Activated naive CD4-positive, alpha-beta T cell treated with anti-CD3 and anti-CD28 coated beads, Interleukin-2, amount 10 ng/mL, durations not matched to agents 7 days and 5 days (primary cell): ENCODE measurements at regions of chr1 and their contacts with region 1.

Region 1: DNA sequence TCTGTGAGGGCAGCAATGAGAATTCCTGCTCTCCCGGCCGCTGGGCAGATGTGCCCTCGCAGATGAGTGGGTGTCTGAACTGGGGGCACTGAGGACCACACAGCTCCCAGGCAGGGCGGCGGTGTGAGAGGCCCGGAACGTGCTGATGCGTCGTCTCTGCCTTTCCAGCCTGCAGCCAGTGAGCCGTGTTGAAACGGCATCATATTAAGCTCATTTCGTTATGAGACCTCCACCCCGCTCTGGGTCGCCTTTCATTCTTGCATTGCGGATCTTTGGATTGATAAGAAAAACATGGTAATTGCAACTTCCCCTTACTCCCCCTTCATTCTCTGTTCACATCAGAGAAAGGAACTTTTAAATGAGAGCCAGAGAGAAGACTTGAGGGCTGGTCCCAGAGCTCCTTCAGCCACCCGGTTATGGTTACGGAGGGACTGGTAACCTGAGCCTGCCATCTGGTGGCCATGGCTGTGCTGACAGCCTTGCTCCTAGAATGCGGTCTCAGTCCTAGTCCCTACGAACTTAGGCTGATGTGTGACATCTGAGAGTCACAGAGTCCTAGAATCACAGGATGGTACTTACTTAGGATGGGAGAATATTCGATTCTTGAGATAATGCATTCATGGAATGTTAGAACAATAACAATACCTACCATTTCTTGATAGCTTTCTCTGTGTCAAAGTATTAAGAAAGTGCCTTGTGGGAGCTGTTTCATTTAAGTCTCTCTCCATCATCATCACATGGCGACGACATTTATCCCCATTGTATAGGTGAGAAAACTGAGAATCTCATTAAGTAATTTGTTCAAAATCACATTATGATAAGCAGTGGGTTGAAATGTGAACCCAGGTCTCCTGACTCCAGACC is 271.0 kb downstream of the TRABD2B start:
- DNase-seq: peak; percentile 75
- H3K4me3 Mint-ChIP-seq: no peak overlapping the region
- H3K27ac Mint-ChIP-seq: no peak overlapping the region
- H3K4me1 Mint-ChIP-seq: peaks cover 5% of the 10 kb centered on the region
- H3K27me3 Mint-ChIP-seq: peaks cover 64% of the 10 kb centered on the region

Region 2: GRCh38 chr1:47388891-47389238 is 337.4 kb before region 1 on chr1:
- CTCF ChIA-PET with region 1: interaction called, 40 read pairs
- DNase-seq: peak; percentile 65
- H3K4me3 Mint-ChIP-seq: no peak overlapping the region
- H3K27ac Mint-ChIP-seq: no peak overlapping the region
- H3K4me1 Mint-ChIP-seq: no peaks in the 10 kb centered on the region
- H3K27me3 Mint-ChIP-seq: peaks cover 18% of the 10 kb centered on the region

Region 3: DNA sequence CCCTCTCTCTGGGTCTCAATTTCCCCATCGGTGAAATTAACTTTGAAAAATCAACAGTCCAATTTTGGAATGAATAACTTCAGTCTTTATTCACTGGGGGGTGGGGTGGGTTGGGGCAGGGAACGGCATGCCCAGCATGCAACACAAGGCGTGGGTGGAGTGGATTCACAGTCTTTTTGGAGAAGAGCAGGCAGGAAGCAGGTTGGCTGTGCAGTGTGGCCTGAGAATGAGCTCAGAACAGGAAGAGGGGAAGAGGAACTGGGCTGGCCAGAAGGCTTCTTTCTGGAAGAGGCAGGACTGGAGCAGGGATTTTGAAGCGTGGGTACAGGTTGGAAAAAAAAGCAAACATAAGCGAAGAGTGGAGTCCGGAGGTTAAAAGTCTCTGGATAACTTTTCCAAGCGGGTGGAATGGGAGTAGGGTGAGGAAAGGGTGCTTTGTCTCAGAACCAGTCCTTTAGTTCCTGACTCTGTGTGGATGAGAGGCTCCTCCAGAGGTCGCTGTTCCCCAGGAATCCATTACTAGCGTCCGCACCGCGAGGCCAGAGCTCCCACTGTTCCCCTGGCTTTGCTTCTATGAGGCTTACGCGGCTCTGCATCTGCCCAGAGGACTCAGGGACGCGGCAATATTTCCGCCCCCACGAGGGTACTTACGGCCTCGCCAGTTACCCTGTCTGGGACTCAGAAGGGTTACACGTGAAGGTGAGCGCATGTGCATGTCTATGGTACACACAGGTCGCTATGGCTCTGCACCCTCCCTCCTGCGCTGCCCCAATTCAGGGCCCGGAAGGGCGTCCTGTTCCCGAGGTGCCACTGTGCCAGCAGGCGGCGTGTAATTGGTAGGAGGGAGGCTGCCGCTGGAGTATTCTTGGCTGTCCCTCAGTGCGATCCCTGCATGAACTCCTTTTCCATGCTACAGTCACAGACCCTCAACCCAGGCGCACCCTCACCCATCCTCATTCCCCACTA is 293.9 kb before region 1 on chr1:
- CTCF ChIA-PET with region 1: interaction called, 36 read pairs
- DNase-seq: peak; percentile 77
- H3K4me3 Mint-ChIP-seq: peak overlapping the region; percentile 37
- H3K27ac Mint-ChIP-seq: peak overlapping the region; percentile 76
- H3K4me1 Mint-ChIP-seq: peaks cover 43% of the 10 kb centered on the region
- H3K27me3 Mint-ChIP-seq: peaks cover 68% of the 10 kb centered on the region

Region 4: GRCh38 chr1:47437447-47438164 is 288.6 kb before region 1 on chr1 and contains the start of gene FOXD2:
- CTCF ChIA-PET with region 1: interaction called, 36 read pairs
- DNase-seq: peak; percentile 91
- H3K4me3 Mint-ChIP-seq: peak within 1 kb of the TSS; percentile 93
- H3K27ac Mint-ChIP-seq: peak within 1 kb of the TSS; percentile 86
- H3K4me1 Mint-ChIP-seq: peaks cover 34% of the 10 kb centered on the region
- H3K27me3 Mint-ChIP-seq: peaks cover 49% of the 10 kb centered on the region

Region 5: GRCh38 chr1:47449822-47450552 is 276.2 kb before region 1 on chr1:
- CTCF ChIA-PET with region 1: interaction called, 16 read pairs
- DNase-seq: no peak
- H3K4me3 Mint-ChIP-seq: no peak overlapping the region
- H3K27ac Mint-ChIP-seq: no peak overlapping the region
- H3K4me1 Mint-ChIP-seq: peaks cover 4% of the 10 kb centered on the region
- H3K27me3 Mint-ChIP-seq: peaks cover 56% of the 10 kb centered on the region

Region 6: GRCh38 chr1:47738560-47739182 is 12.4 kb after region 1 on chr1:
- CTCF ChIA-PET with region 1: interaction called, 11 read pairs
- DNase-seq: no peak
- H3K4me3 Mint-ChIP-seq: no peak overlapping the region
- H3K27ac Mint-ChIP-seq: no peak overlapping the region
- H3K4me1 Mint-ChIP-seq: no peaks in the 10 kb centered on the region
- H3K27me3 Mint-ChIP-seq: peaks cover 19% of the 10 kb centered on the region

Region 7: DNA sequence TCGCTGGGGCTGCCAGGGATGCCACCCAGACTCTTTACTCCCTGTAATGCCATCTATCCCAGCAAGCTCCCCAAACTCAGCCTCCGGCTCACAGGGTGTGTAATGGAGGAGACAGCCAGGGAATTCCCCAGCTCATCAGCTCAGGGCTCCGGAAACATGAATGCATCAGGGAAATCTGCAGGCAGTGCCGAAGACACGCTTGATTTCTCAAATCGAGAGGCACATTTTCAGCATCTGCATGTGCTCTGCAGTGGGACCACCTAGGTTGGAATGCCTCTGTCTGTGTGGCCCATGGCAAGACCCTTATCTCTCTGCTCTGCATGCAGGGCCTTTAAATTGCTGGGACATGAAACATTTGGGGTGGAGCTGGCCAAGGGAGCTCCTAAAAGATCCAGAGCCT is 100.9 kb after region 1 on chr1:
- CTCF ChIA-PET with region 1: no interaction called
- DNase-seq: no peak
- H3K4me3 Mint-ChIP-seq: no peak overlapping the region
- H3K27ac Mint-ChIP-seq: no peak overlapping the region
- H3K4me1 Mint-ChIP-seq: no peaks in the 10 kb centered on the region
- H3K27me3 Mint-ChIP-seq: no peaks in the 10 kb centered on the region